ENCODE measurements at regions of chr22 and their contacts with region 1.

Region 1: GRCh38 chr22:41946629-41947423 is at the start of gene CENPM:
- DNase-seq: peak; percentile 80 to 88
- ATAC-seq: peak; percentile 95 to 98
- H3K4me3 ChIP-seq: peak within 1 kb of the TSS; percentile 61 to 83 (median 80)
- H3K27ac ChIP-seq: peak within 1 kb of the TSS; percentile 61 to 77 (median 68)
- H3K4me1 ChIP-seq: peaks cover 0 to 14% of the 10 kb centered on the region in 2 donors
- H3K27me3 ChIP-seq: peaks cover 0 to 1% (median 0%) of the 10 kb centered on the region in 3 donors
- CTCF ChIP-seq: peak in 1 of 5 experiments; percentile 12
- POLR2A ChIP-seq: no peak
- total RNA-seq, gene CENPM: 1.5 to 5.1 TPM in 2 of 4 donors, not detected in the others

Region 2: GRCh38 chr22:41697126-41697775 is 249.6 kb before region 1 on chr22:
- in situ Hi-C with region 1: loop called (anchors 5 to 10 kb)
- intact Hi-C with region 1: no loop called
- DNase-seq: peak; percentile 58 to 78
- ATAC-seq: peak; percentile 80 to 86
- H3K4me3 ChIP-seq: peak overlapping the region in 2 of 4 donors; percentile 14 to 30
- H3K27ac ChIP-seq: peak overlapping the region in 2 of 4 donors; percentile 41 to 56
- H3K4me1 ChIP-seq: peaks cover 4% of the 10 kb centered on the region in 2 donors
- H3K27me3 ChIP-seq: no peaks in the 10 kb centered on the region
- CTCF ChIP-seq: peak; percentile 84 to 99 (median 95)
- POLR2A ChIP-seq: no peak

Region 3: DNA sequence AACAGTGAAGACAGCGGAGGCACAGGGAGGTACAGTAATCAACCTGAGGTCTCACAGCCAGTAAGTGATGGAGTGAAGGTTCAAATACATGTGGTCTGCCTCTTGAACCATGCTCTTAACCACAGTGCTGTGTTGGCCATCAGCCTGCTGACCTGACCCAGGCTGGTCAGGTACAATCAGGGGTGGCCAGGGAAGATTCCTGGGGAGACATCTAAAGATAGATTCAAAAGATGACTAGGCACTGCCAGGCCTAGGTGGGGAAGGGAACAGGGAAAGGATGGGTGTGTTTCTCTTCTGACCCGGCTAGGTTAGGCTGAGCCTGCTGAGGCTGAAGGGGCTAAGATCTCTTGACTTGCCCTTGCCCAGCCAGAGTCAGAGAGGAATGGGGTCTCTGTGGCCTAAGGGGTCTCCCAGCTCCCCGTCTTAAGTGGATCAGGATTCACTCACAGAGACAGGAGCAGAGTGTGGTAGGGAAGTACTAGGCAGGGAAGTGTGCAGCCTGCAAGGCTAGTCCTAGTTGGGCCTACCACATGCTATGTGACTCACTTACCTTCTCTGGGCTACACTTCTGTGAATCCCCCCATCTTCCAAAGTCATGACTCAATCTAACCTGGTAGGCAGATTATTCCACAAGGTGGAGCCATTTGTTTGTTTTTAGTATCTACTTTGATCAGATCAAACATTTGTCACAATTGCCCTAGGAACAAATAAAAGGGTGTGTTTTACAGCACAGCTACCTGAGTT is 124.3 kb before region 1 on chr22:
- in situ Hi-C with region 1: loop called in 3 of 4 experiments (anchors 5 to 10 kb)
- intact Hi-C with region 1: no loop called
- DNase-seq: no peak
- ATAC-seq: peak in 1 of 2 donors; percentile 41
- H3K4me3 ChIP-seq: no peak overlapping the region
- H3K27ac ChIP-seq: no peak overlapping the region
- H3K4me1 ChIP-seq: peaks cover 22 to 24% of the 10 kb centered on the region in 2 donors
- H3K27me3 ChIP-seq: no peaks in the 10 kb centered on the region
- CTCF ChIP-seq: peak; percentile 50 to 72 (median 65)
- POLR2A ChIP-seq: no peak

Region 4: DNA sequence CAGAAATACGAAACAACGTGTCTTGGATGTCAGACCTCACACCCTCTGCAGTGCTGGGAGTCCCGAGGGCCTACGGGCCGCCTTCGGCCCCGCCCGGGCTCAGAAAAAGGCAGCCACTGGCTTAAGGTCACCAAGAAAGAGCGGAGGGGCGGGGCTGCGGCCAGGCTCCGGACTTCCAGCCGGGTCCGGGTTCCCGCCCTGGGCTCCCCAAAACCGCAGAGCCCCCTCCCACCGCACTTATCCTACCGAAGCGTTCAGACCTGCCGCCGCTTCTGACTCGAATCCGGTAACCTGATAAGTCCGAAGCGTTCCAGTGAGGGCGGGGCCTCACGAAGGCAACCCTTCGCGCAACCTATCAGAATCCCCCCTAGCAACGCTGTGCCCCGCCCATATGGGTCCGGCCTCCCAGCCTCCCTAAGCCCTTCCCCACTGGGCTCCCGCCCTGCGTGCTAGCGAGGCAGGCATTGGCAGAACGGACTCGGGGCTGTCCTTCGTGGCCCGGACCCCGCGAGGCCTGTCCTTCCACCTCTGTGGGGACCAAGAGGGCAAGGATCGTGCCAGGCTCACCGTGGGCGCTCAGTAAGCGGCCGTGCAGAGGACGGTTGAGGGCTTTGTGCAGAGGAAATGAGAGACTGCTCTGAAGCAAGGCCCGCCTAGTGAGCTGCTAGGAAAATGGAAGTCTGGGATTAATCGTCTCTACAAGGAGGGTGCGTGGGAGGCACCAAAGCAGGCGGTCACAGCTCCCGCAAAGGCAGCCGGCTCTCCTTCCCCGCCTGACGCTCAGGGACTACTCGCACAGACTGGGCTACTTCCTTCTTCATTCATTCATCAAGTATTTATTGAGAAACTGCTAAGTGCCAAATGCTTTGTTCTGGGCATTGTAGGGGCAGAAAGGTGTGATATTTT is 123.9 kb after region 1 on chr22 and contains the start of gene NAGA:
- in situ Hi-C with region 1: no loop called
- intact Hi-C with region 1: loop called (anchors 2 kb)
- DNase-seq: peak; percentile 95 to 96
- ATAC-seq: peak; percentile 97
- H3K4me3 ChIP-seq: peak within 1 kb of the TSS; percentile 64 to 81 (median 72)
- H3K27ac ChIP-seq: peak within 1 kb of the TSS; percentile 86 to 91 (median 88)
- H3K4me1 ChIP-seq: peaks cover 11 to 26% of the 10 kb centered on the region in 2 donors
- H3K27me3 ChIP-seq: no peaks in the 10 kb centered on the region
- CTCF ChIP-seq: no peak
- POLR2A ChIP-seq: peak; percentile 68 to 88
- total RNA-seq, gene NAGA: 8.7 to 14.1 (median 11.9) TPM

Region 5: GRCh38 chr22:42369245-42370041 is 422.6 kb after region 1 on chr22:
- in situ Hi-C with region 1: no loop called
- intact Hi-C with region 1: loop called (anchors 2 kb)
- DNase-seq: peak; percentile 87 to 91
- ATAC-seq: peak; percentile 96 to 97
- H3K4me3 ChIP-seq: peak overlapping the region; percentile 60 to 76 (median 68)
- H3K27ac ChIP-seq: peak overlapping the region in 2 of 4 donors; percentile 39 to 40
- H3K4me1 ChIP-seq: peaks cover 11 to 18% of the 10 kb centered on the region in 2 donors
- H3K27me3 ChIP-seq: peaks cover 10 to 18% (median 13%) of the 10 kb centered on the region in 3 donors
- CTCF ChIP-seq: no peak
- POLR2A ChIP-seq: no peak

Measured in gastrocnemius medialis (tissue), 4 donors.